HepG2 (cell line): ENCODE measurements at regions of chr17 and their contacts with region 1.

Region 1: DNA sequence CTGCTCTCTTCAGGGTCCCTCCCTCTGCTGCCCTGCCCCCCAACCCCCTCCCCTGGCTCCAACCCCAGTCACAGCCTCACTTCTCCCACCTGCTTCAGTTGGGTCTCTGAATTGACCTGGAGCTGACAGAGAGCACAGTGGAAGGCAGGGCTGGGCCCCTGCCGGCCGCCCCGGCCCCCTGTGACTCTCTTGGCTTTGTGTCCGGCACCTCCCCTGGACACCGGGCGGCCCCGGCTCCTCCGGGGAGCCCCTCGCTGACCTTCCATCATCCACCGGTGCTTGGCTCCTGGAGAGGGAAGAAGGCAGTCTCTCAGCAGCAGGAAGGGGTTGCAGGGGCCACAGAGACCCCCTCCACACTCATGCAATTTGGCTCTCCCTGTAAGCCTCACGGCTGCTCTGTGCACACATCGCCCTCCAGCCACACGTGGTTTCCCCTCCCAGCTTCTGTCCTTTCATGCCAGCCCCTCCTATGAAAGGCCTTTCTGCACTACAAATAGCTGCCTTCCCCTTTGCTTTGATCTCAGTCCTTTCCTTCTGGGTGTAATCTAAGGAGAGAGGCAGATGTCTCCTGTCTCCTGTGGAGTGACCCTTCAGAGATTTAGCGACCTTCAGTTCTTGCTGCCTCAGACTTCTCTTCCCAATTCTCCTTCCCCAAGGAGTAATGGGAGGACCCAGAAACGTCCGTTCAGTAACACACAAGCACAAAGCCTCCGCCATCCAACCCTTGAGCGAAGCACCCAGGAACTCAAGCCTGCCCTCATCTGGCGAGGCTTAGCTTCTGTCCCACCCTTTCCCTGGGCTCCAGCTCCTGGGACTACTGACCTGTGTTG is 8.3 kb downstream of the NKIRAS2 start:
- DNase-seq: peak; percentile 79
- ATAC-seq: peak; percentile 88
- H3K4me3 ChIP-seq: peak overlapping the region in 2 of 3 experiments; percentile 8 to 63; a peak in 4 of 6 replicates
- H3K27ac ChIP-seq: no peak overlapping the region
- H3K4me1 ChIP-seq: peaks cover 61% of the 10 kb centered on the region
- H3K27me3 ChIP-seq: no peaks in the 10 kb centered on the region
- CTCF ChIP-seq: peak; percentile 93
- EP300 ChIP-seq: no peak
- POLR2A ChIP-seq: peak in 1 of 2 experiments; percentile 45; a peak in 1 of 4 replicates
- RAD21 ChIP-seq: peak; percentile 56

Region 2: DNA sequence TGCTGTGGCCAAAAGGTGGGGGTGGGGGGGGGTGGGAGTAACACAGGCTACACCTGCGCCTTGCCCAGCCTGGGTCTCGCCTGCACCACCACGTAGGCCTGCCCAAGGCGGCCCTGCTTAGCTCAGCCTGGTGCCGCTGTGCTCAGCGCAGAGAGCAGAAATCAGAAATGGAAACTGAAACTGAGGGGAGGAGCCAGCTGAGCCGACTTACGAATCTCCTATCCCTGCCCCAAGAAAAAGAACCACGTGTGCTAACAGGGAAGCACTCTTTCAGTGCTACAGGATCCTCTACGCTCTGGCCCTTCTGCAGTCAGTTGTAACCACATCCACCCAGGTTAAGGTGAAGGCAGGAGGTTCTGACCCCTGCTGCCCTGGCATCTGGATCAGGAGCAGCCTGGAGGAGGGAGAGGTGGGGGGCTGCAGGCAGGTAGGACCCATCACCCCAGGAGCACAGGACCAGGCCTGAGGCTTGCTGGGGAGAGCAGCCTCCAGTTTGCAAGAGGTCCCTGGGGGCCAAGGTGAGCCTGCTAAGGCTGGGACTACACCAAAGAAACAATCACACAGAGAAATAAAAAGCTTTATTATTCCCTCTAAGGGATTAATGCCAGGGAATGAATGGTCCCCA is 84.5 kb after region 1 on chr17 and contains the start of gene DHX58:
- CTCF ChIA-PET with region 1: interaction called, 20 read pairs
- POLR2A ChIA-PET with region 1: interaction called, 4 read pairs
- in situ Hi-C with region 1: loop called (anchors 5 kb)
- intact Hi-C with region 1: loop called (anchors 2 kb)
- DNase-seq: peak; percentile 64
- ATAC-seq: peak; percentile 80
- H3K4me3 ChIP-seq: peak within 1 kb of the TSS; percentile 43 to 73 (median 55); a peak in 5 of 6 replicates
- H3K27ac ChIP-seq: peak within 1 kb of the TSS; percentile 51
- H3K4me1 ChIP-seq: peaks cover 40% of the 10 kb centered on the region
- H3K27me3 ChIP-seq: no peaks in the 10 kb centered on the region
- CTCF ChIP-seq: peak; percentile 8; the same call in 1 of the 2 replicates
- EP300 ChIP-seq: no peak
- POLR2A ChIP-seq: peak in 1 of 2 experiments; percentile 74; a peak in 2 of 4 replicates
- RAD21 ChIP-seq: no peak
- total RNA-seq, gene DHX58: 3.9 and 6.7 TPM in 2 replicates